Activated CD8-positive, alpha-beta T cell treated with anti-CD3 and anti-CD28 coated beads, Interleukin-2, amount 10 ng/mL, durations not matched to agents 7 days and 5 days (primary cell): ENCODE measurements at regions of chr1 and their contacts with region 1.

Region 1: DNA sequence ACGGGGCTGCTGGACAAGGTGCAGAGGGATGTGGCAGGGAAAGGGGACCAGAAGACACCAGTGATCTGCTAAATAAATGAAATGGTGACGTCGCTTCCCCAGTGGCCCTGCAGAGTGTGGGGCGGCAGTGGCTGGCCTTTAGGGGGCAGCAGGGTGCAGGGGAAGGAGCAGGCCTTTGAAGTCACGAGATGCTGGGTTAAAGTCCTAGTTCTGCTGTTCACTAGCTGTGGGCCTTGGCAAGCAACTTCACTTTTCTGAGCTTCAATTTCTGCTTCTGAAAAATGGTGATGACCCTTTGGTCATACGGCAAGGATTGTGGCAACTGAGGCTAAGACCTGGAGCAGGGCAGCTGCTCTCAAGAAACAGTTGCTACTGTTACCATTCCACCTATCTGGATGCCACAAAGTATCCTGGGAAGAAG is 9.2 kb upstream of the GALE start:
- DNase-seq: peak; percentile 92
- ATAC-seq: peak; percentile 97
- H3K4me3 Mint-ChIP-seq: no peak overlapping the region
- H3K27ac Mint-ChIP-seq: no peak overlapping the region
- H3K4me1 Mint-ChIP-seq: peaks cover 26% of the 10 kb centered on the region
- H3K27me3 Mint-ChIP-seq: no peaks in the 10 kb centered on the region

Region 2: GRCh38 chr1:23718482-23718881 is 91.3 kb before region 1 on chr1:
- CTCF ChIA-PET with region 1: no interaction called
- POLR2A ChIA-PET with region 1: no interaction called
- DNase-seq: no peak
- ATAC-seq: no peak
- H3K4me3 Mint-ChIP-seq: no peak overlapping the region
- H3K27ac Mint-ChIP-seq: no peak overlapping the region
- H3K4me1 Mint-ChIP-seq: peaks cover 3% of the 10 kb centered on the region
- H3K27me3 Mint-ChIP-seq: no peaks in the 10 kb centered on the region

Region 3: DNA sequence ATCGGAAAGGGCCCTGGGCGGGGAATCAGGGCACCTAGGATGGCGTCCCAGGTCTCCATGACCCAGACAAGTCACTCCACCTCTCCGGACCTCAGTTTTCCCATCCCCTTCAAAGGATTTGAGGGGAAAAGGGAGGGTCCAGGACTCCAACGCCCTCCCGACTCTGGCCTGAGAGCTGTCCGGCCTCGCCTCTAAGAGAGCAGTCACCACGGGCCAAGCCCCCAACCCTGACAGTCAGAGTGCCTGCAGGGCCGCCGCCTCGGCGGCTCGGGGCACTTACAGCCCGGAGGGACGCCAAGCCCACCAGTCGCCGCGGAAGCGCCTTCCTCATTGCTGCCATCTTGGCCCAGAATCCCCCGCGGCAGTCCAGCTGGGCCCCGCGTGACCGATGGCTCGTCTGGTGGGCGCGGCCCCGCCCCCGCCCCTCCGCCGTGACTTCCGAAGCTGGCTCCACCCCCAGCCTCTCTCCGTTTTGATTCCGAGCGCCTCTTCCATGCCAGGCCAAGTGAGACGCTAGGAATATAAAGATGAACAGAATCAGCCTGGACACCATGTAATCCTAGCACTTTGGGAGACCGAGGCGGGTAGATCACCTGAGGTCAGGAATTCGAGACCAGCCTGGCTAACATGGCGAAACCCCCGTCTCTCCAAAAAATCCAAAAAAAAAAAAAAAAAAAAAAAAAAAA is 15.5 kb after region 1 on chr1 and contains the start of gene HMGCL:
- CTCF ChIA-PET with region 1: interaction called, 86 read pairs
- POLR2A ChIA-PET with region 1: interaction called, 5 read pairs
- DNase-seq: peak; percentile 93
- ATAC-seq: peak; percentile 96
- H3K4me3 Mint-ChIP-seq: peak within 1 kb of the TSS; percentile 96
- H3K27ac Mint-ChIP-seq: peak within 1 kb of the TSS; percentile 93
- H3K4me1 Mint-ChIP-seq: peaks cover 21% of the 10 kb centered on the region
- H3K27me3 Mint-ChIP-seq: no peaks in the 10 kb centered on the region
- total RNA-seq, gene HMGCL: 24.9 to 27.1 TPM

Region 4: DNA sequence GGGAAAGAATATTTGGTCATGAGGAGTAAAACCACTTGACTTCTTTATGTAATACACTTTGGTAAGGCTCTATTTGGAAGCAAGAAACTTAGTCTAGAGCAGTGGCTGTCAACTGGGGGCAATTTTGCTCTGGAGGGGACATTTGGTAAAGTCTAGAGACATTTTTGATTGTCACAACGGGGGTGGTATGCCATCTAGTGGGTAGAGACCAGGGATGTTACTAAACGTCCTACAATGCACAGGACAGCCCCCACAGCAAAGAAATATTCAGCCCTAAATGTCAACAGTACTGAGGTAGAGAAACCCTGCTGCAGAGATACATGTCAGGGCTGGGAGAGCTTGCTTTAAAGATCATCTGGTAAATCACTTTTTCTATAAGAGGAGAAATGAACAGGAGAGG is 44.8 kb after region 1 on chr1:
- CTCF ChIA-PET with region 1: interaction called, 25 read pairs
- POLR2A ChIA-PET with region 1: no interaction called
- DNase-seq: peak; percentile 28
- ATAC-seq: peak; percentile 36
- H3K4me3 Mint-ChIP-seq: no peak overlapping the region
- H3K27ac Mint-ChIP-seq: no peak overlapping the region
- H3K4me1 Mint-ChIP-seq: no peaks in the 10 kb centered on the region
- H3K27me3 Mint-ChIP-seq: no peaks in the 10 kb centered on the region

Region 5: GRCh38 chr1:23897083-23897482 is 87.3 kb after region 1 on chr1:
- CTCF ChIA-PET with region 1: interaction called, 23 read pairs
- POLR2A ChIA-PET with region 1: no interaction called
- DNase-seq: no peak
- ATAC-seq: no peak
- H3K4me3 Mint-ChIP-seq: no peak overlapping the region
- H3K27ac Mint-ChIP-seq: no peak overlapping the region
- H3K4me1 Mint-ChIP-seq: peaks cover 24% of the 10 kb centered on the region
- H3K27me3 Mint-ChIP-seq: peaks cover 16% of the 10 kb centered on the region

Region 6: GRCh38 chr1:23916209-23917131 is 106.7 kb after region 1 on chr1:
- CTCF ChIA-PET with region 1: interaction called, 131 read pairs
- POLR2A ChIA-PET with region 1: interaction called, 4 read pairs
- DNase-seq: peak; percentile 84
- ATAC-seq: peak; percentile 93
- H3K4me3 Mint-ChIP-seq: no peak overlapping the region
- H3K27ac Mint-ChIP-seq: peak overlapping the region; percentile 5
- H3K4me1 Mint-ChIP-seq: peaks cover 49% of the 10 kb centered on the region
- H3K27me3 Mint-ChIP-seq: no peaks in the 10 kb centered on the region